A549 (cell line): ENCODE measurements at regions of chr1 and their contacts with region 1.

Region 1: GRCh38 chr1:202462342-202463076 is 114.0 kb downstream of the PPP1R12B start:
- DNase-seq: no peak
- ATAC-seq: no peak
- H3K4me3 ChIP-seq: no peak overlapping the region
- H3K27ac ChIP-seq: no peak overlapping the region
- H3K4me1 ChIP-seq: peaks cover 52% of the 10 kb centered on the region
- CTCF ChIP-seq: no peak
- EP300 ChIP-seq: no peak
- POLR2A ChIP-seq: no peak
- RAD21 ChIP-seq: no peak

Region 2: DNA sequence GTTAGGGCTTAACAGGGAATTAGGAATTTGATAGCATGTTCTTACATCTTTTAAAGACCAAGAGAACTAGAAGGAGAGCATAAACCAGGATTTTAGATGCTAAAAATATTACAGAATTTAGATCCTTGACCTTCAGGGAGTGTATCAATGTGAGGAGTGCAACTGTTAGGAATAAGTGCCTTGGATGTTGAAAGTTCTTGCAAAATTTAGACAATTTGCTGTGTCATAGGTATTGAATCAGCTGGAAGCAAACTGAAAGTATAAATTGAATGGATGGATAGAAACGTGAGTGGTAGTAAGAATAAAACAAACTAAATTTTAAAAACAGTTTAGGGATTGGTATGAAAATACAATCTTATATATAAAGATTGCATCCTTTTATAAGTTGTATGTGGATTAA is 86.3 kb before region 1 on chr1:
- CTCF ChIA-PET with region 1: no interaction called
- POLR2A ChIA-PET with region 1: no interaction called
- DNase-seq: peak in 1 of 2 experiments; percentile 22
- ATAC-seq: no peak
- H3K4me3 ChIP-seq: no peak overlapping the region
- H3K27ac ChIP-seq: peak overlapping the region; percentile 62 to 75; a peak in 5 of 6 replicates
- H3K4me1 ChIP-seq: peaks cover 58% of the 10 kb centered on the region
- CTCF ChIP-seq: no peak
- EP300 ChIP-seq: no peak
- POLR2A ChIP-seq: no peak
- RAD21 ChIP-seq: no peak

Region 3: GRCh38 chr1:202522983-202523382 is 60.5 kb after region 1 on chr1:
- CTCF ChIA-PET with region 1: no interaction called
- POLR2A ChIA-PET with region 1: no interaction called
- DNase-seq: no peak
- ATAC-seq: no peak
- H3K4me3 ChIP-seq: no peak overlapping the region
- H3K27ac ChIP-seq: no peak overlapping the region
- H3K4me1 ChIP-seq: 0 out of 3 replicates have a peak, but pooled peaks cover 2% of the 10 kb centered on the region
- CTCF ChIP-seq: no peak
- EP300 ChIP-seq: no peak
- POLR2A ChIP-seq: no peak
- RAD21 ChIP-seq: no peak

Region 4: DNA sequence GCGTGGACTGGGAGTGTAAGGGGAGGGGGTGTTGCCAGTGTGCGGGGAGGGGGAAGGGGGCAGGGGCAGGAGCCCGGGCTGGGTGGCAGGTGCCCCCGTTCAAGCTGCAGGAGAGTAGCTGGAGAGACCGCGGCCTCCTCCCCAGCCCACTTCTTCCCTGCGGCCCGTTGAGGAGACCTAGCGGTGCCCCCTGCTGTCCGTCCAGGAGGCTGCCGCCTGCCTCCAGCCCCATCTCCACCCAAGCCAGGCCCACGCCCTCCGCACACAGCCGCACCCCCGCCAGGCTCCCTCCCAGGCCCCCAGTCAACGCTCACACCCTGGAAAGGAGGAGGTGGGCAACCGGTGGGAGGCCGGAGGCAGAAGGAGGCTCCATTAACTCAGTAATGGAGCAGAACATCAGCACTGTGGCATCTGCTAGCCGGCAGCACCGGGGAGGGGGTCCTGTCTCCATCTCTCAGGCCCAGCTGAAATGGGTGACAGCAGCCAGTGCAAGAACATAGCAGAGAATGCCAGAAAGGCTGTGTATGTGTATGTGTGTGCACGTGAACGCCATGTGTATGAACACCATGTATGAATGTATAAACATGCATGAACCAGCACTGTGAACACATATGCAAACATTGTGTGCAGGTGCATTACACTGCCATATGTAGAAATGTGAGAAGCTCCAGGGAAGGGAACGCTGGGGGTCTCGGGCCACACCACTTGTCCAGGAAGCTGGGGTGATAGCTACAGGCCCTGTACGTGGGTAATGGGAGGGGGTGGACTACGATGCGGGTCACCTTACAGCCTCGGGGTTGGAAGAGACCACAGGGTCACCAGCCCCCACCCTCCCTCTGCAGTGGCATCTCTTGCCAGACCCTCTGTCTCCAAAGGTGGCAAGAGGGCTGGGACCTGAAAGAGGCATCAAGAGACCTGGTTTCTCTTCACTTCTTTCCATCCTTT is 163.2 kb after region 1 on chr1:
- CTCF ChIA-PET with region 1: interaction called, 10 read pairs
- POLR2A ChIA-PET with region 1: no interaction called
- DNase-seq: peak; percentile 79 to 86
- ATAC-seq: peak; percentile 89 to 97
- H3K4me3 ChIP-seq: no peak overlapping the region
- H3K27ac ChIP-seq: peak overlapping the region; percentile 35 to 48; a peak in 3 of 6 replicates
- H3K4me1 ChIP-seq: peaks cover 11% of the 10 kb centered on the region
- CTCF ChIP-seq: peak; percentile 60
- EP300 ChIP-seq: no peak
- POLR2A ChIP-seq: no peak
- RAD21 ChIP-seq: peak; percentile 68 to 75

Region 5: DNA sequence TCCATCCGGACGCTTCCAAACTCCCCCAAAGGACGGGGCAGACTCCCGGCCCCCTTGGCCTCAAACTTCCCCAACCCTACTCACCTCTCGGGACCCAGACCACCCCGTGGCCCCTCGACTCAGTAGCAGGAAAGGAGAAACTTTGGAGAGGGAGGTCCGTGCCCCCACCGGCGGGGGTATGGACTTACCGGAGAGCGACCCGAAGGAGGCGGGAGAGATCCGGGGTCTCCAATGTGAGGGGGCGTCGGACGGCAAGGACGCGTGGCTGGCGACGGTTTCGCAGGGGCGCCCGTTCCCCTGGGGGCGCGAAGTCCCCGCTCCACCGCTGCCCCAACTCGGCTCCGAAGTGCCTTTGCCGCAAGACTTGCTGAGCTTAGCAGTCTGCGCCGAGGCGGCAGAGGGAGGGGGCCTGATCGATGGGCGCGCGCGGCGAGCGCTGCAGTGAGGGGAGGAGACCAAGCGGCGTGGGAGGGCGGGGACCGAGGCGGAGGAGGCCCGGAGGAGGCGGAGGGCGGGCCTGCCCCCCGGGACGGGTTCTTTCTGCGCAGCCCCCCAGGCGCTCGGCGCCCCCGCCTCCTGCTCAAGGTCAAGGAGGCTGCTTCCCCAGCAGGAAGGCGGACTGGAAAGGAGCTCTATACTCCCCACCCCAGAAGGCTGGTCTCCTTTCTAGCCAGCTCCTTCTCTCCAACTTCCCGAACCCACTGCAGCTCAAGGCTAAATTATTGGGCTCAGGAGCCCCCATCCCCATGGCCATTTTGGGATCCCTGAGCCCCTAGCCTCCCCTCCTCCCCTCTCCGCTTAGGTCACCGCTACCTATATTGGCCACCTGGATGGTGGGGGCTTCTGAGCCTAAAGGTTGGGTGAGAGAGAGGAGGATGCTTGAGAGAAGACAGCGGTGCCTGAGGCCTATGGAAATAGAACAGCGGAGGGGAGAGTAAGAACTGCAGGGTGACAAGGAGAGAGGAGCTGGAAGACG is 247.8 kb after region 1 on chr1 and contains the start of gene SYT2:
- CTCF ChIA-PET with region 1: interaction called, 11 read pairs
- POLR2A ChIA-PET with region 1: no interaction called
- DNase-seq: peak in 1 of 2 experiments; percentile 34
- ATAC-seq: peak; percentile 32 to 63; a peak in 4 of 6 replicates
- H3K4me3 ChIP-seq: peak within 1 kb of the TSS; percentile 52
- H3K27ac ChIP-seq: peak within 1 kb of the TSS; percentile 49 to 62; a peak in 5 of 6 replicates
- H3K4me1 ChIP-seq: peaks cover 30% of the 10 kb centered on the region
- CTCF ChIP-seq: no peak
- EP300 ChIP-seq: no peak
- POLR2A ChIP-seq: no peak
- RAD21 ChIP-seq: no peak
- polyA plus RNA-seq, gene SYT2: 0.03 TPM in 2 replicates